A549 (cell line): ENCODE measurements at regions of chr17 and their contacts with region 1.

Region 1: GRCh38 chr17:30116661-30117551 is at the start of gene NSRP1:
- DNase-seq: peak; percentile 97 to 99
- ATAC-seq: peak; percentile 96 to 98
- H3K4me3 ChIP-seq: peak within 1 kb of the TSS; percentile 62
- H3K27ac ChIP-seq: peak within 1 kb of the TSS; percentile 89 to 94
- H3K4me1 ChIP-seq: peaks cover 40% of the 10 kb centered on the region; the same call in 2 of the 3 replicates
- CTCF ChIP-seq: no peak
- EP300 ChIP-seq: no peak
- POLR2A ChIP-seq: peak; percentile 97
- RAD21 ChIP-seq: no peak
- polyA plus RNA-seq, gene NSRP1: 25.2 and 30.9 TPM in 2 replicates

Region 2: DNA sequence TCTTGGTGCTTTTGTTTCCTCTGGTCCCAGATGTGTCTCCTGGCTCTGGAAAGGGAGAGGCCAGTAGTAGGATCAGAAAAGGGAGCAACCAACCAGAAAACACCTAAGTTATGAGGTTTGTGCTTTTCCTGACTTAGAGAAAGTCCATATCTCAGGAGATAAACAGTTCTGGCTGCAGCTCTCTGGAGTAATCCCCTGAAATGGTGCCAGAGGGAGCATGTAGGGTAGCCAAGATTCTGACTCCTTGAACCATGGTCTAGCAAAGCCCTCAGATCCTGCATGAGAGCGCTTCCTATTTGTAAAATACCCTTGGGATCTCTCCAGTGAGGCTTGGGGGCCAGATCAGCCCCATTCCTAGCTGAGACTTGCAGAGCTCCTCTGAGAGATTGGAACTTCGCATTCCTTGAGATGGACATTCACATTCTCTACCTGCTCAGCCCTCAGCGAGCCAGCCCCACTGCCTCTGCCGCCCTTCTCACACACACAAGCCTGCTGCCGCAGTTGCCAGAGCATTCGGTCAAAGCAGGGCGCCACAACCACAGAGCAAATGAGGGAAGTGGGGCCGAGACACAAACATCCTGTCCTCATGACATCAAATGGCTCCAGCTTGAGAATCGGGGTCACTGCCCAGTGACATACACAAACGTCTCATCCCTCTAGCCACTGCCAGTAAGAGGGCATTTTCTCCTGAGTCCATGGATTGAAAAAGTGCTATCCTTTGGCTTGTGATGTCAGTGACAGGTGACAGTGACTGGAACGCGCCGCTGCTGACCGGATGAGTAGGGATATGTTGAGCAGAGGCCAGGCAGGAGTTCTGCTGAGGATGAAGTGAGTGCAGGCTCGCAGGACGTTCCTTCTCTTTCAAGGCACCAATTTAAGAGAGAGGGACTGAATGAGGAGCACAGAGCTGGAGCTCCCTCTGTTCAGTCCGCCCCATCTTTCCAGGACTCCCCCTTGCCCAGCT is 555.1 kb before region 1 on chr17:
- CTCF ChIA-PET with region 1: no interaction called
- POLR2A ChIA-PET with region 1: no interaction called
- DNase-seq: no peak
- ATAC-seq: no peak
- H3K4me3 ChIP-seq: no peak overlapping the region
- H3K27ac ChIP-seq: no peak overlapping the region
- H3K4me1 ChIP-seq: peaks cover 25% of the 10 kb centered on the region
- CTCF ChIP-seq: no peak
- EP300 ChIP-seq: no peak
- POLR2A ChIP-seq: no peak
- RAD21 ChIP-seq: no peak

Region 3: GRCh38 chr17:30323895-30324319 is 207.0 kb after region 1 on chr17:
- CTCF ChIA-PET with region 1: no interaction called
- POLR2A ChIA-PET with region 1: interaction called, 10 read pairs
- DNase-seq: peak in 1 of 2 experiments; percentile 43
- ATAC-seq: peak; percentile 49 to 68
- H3K4me3 ChIP-seq: no peak overlapping the region
- H3K27ac ChIP-seq: peak overlapping the region; percentile 33 to 48; a peak in 4 of 6 replicates
- H3K4me1 ChIP-seq: peaks cover 30% of the 10 kb centered on the region
- CTCF ChIP-seq: no peak
- EP300 ChIP-seq: no peak
- POLR2A ChIP-seq: no peak
- RAD21 ChIP-seq: no peak